GM12878 (cell line): ENCODE measurements at regions of chr9 and their contacts with region 1.

Region 1: DNA sequence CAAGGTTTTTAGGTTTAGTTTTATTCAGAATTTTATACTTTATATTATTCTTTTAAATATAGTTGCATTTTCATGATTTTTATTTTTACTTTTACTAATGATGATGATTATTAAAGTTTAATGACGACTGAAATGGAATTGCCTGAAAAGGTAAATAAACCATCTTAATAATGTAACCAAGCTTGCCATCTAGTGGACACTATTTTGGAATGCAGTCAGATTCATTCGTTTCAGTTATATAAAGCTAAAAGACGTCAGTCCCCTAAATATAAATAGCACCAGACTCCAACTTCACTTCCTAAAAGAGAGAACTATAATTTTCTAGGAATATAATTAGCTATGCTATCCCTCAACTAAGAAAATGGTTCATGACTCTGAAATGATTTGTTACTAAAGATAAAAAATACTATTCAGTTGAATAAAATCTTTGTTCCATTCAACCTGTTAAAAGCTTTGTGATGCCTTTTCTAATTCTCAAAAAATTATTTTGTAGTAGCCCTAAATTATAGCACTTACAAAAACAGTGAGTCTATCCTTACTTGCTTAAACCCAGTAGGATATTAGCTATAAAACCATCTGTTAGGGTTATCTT is 19.9 kb downstream of the ABITRAM start:
- DNase-seq: no peak
- ATAC-seq: peak; percentile 69
- H3K4me3 ChIP-seq: no peak overlapping the region
- H3K27ac ChIP-seq: no peak overlapping the region
- H3K4me1 ChIP-seq: no peaks in the 10 kb centered on the region
- H3K27me3 ChIP-seq: no peaks in the 10 kb centered on the region
- CTCF ChIP-seq: peak; percentile 40 to 61 (median 50); a peak in 5 of 6 replicates
- EP300 ChIP-seq: no peak
- POLR2A ChIP-seq: no peak
- RAD21 ChIP-seq: peak; percentile 54

Region 2: DNA sequence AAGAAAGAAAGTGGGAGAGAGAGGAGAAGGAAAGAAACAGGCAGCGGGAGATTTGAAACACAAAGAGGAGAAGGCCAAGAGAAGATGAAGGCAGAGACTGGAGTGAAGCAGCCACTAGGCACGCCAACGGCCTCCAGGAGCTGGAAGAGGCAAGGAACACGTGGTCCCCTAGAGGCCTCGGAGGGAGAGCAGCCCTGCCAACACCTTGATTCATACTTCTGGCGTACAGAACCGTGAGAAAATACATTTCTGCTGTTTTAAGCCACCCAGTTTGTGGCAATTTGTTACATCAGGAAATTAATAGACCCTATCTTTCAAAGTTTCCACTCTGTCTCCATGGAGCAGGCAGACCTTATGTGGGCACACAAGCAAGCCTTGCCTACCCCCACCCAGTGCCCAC is 231.7 kb before region 1 on chr9:
- CTCF ChIA-PET with region 1: no interaction called
- POLR2A ChIA-PET with region 1: no interaction called
- RAD21 ChIA-PET with region 1: no interaction called
- SMC1A ChIA-PET with region 1: no interaction called
- in situ Hi-C with region 1: no loop called
- intact Hi-C with region 1: no loop called
- DNase-seq: no peak
- ATAC-seq: no peak
- H3K4me3 ChIP-seq: no peak overlapping the region
- H3K27ac ChIP-seq: no peak overlapping the region
- H3K4me1 ChIP-seq: no peaks in the 10 kb centered on the region
- H3K27me3 ChIP-seq: no peaks in the 10 kb centered on the region; a peak in 1 of 4 replicates
- CTCF ChIP-seq: no peak
- EP300 ChIP-seq: no peak
- POLR2A ChIP-seq: no peak
- RAD21 ChIP-seq: no peak

Region 3: DNA sequence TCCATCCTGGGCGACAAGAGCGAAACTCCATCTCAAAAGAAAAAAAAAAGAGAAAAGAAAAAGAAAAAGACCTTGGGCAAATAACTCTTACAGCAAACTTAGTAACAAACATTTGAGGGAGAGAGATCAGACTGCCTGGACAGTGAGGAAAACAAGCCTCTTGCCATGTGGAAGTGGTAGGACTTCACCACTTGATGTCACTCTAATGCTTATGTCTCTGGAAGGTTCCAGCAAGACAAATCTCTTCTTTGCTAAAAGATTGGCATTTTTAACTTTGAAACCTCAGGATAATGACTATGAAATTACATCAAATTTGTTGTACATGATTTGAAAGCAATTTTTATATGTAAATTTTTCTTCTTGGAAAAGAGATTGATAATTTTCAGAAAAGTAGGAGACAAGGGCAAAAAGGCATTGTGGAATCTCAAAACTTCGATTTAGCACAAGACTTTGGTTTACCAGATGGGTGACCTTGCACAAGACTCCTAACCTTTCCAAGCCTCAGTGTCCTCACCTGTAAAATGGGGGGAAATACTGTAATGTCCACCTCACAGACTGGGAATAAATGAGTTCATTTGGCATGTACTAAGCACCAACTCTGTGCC is 103.7 kb before region 1 on chr9:
- CTCF ChIA-PET with region 1: interaction called, 29 read pairs
- POLR2A ChIA-PET with region 1: no interaction called
- RAD21 ChIA-PET with region 1: interaction called, 8 read pairs
- SMC1A ChIA-PET with region 1: interaction called, 6 read pairs
- in situ Hi-C with region 1: no loop called
- intact Hi-C with region 1: loop called (anchors 5 kb)
- DNase-seq: no peak
- ATAC-seq: peak; percentile 59
- H3K4me3 ChIP-seq: no peak overlapping the region
- H3K27ac ChIP-seq: no peak overlapping the region
- H3K4me1 ChIP-seq: no peaks in the 10 kb centered on the region
- H3K27me3 ChIP-seq: peaks cover 0 to 2% of the 10 kb centered on the region in 2 experiments; a peak in 2 of 4 replicates
- CTCF ChIP-seq: peak; percentile 40 to 51 (median 42); a peak in 4 of 6 replicates
- EP300 ChIP-seq: no peak
- POLR2A ChIP-seq: no peak
- RAD21 ChIP-seq: peak; percentile 61

Region 4: DNA sequence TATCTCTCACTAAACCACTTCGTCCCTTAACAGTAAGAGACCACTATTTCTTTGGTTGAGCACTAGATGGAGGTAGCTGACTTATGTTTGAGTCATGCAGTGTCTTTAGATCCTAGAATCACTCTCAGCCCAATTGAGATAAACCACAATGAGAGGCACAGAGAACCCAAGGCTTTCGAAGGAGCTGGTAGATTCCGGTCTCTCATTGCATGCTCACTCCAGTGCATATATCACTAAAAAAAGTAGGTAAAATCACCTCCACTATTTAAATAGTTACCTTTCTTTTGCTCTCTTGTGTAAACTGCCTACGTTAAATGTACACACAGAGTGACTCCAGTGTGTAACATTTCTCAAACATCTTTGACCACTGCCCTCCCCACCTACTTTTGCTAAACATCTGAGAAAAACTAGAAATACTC is 64.4 kb before region 1 on chr9:
- CTCF ChIA-PET with region 1: interaction called, 13 read pairs
- POLR2A ChIA-PET with region 1: no interaction called
- RAD21 ChIA-PET with region 1: interaction called, 3 read pairs
- SMC1A ChIA-PET with region 1: interaction called, 3 read pairs
- in situ Hi-C with region 1: no loop called
- intact Hi-C with region 1: no loop called
- DNase-seq: no peak
- ATAC-seq: no peak
- H3K4me3 ChIP-seq: no peak overlapping the region
- H3K27ac ChIP-seq: no peak overlapping the region
- H3K4me1 ChIP-seq: peaks cover 8% of the 10 kb centered on the region
- H3K27me3 ChIP-seq: no peaks in the 10 kb centered on the region
- CTCF ChIP-seq: peak in 1 of 3 experiments; percentile 13; a peak in 2 of 6 replicates
- EP300 ChIP-seq: no peak
- POLR2A ChIP-seq: no peak
- RAD21 ChIP-seq: 0 out of 2 replicates have a peak, but pooled peaks have one; percentile 23

Region 5: DNA sequence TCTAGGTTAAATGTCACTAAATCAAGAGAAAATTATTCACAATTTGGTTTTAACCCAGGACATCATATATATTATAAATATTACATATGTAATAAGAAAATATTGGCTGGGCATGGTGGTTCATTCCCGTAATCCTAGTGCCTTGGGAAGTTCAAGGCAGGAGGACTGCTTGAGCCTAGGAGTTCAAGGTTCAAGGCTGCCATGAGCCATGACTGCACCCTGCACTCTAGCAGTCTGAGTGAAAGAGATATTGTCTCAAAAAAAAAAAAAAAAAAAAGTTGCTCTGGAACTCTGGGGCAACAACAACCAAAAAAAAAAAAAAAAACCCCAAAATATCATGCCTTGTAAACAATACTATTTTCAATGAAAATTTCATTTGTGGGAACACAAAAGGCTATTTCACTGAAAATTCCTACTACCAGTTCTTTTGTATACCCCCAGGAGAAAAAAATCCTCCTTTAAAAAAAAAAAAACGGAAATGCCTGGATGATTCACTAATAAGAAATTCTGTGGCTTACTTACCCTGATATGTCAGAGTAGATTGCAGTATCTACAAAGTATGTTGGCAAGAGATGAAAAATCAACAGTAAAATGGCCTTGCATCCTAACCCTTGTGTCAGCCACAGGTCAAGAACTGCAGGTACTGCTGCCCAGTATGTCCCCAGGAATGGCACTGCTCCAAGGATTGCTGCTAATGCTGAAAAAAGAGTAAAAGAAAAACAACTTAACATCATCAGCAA is 81.8 kb after region 1 on chr9:
- CTCF ChIA-PET with region 1: no interaction called
- POLR2A ChIA-PET with region 1: no interaction called
- RAD21 ChIA-PET with region 1: no interaction called
- SMC1A ChIA-PET with region 1: no interaction called
- in situ Hi-C with region 1: no loop called
- intact Hi-C with region 1: no loop called
- DNase-seq: no peak
- ATAC-seq: no peak
- H3K4me3 ChIP-seq: no peak overlapping the region
- H3K27ac ChIP-seq: no peak overlapping the region
- H3K4me1 ChIP-seq: no peaks in the 10 kb centered on the region
- H3K27me3 ChIP-seq: no peaks in the 10 kb centered on the region
- CTCF ChIP-seq: no peak
- EP300 ChIP-seq: no peak
- POLR2A ChIP-seq: no peak
- RAD21 ChIP-seq: no peak